Posterior vena cava (tissue), 2 donors: ENCODE measurements at regions of chr9 and their contacts with region 1.

Region 1: DNA sequence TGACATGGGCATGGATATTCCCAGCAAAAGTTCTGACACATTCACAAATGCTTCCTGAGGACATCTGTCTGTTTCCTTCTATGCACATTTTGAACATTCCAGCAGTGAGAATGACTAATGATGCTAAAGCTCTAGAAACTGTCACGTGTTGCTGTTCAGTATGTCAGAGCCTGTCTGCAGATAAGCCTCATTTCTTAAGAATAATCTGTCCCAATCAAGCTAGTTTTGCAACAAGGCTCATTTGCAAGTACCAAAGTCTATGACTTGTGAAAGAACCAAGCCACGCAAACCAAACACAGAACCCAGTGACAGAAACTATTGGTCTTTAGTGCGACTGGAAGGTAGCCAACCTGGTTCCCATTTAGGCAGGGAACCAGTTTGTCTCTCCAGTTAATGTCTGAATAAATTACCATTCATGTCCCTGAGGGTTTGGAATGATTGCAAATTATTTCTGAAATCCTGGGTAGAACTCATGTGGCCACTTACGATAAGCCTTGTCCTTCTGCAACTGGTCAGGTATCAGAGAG is 178.5 kb downstream of the C9orf152 start:
- DNase-seq: no peak

Region 2: GRCh38 chr9:109560457-109561132 is 468.9 kb before region 1 on chr9:
- intact Hi-C with region 1: loop called in 1 of 2 experiments (anchors 10 kb)
- DNase-seq: no peak

Region 3: DNA sequence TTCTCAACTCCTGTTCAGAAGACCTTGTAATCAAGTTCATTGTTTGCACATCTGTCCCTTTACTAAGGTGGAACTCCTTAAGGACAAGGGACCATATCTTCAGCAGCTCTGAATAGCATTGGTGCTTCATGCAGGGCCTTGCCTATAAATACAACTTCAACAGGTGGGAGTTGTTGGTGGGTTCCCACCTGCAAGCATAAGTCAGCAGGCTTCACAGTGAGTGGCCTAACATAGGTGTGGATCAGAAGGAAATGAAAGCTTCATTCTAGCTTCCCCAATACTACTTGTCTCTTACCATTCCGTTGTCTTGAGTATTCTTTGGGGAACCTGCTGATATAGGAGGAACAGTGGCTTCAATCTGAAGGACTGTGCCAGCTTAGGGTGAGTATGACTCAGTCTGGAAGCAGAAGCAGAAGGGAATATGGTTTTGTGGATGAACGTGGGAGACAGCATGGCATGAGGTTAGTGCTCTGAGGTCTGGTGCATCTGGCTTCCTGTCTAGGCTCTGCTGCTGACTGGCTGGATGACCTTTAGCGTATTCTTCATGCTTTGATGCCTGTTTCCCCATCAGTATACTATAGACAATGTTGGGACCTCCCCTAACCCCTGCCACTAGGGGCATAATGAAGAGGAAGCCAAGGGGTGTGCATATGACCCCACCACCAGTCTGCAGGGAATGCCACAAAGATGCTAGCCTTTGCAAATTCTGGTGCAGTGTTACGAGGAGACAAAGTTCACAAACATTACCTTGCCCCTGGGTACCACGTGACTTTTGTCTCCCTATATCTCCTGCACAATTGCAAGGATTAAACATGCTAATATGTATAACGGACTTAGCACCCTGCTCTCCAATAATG is 57.2 kb before region 1 on chr9:
- intact Hi-C with region 1: loop called in 1 of 2 experiments (anchors 10 kb)
- DNase-seq: no peak

Region 4: GRCh38 chr9:110635589-110635988 is 606.1 kb after region 1 on chr9:
- intact Hi-C with region 1: no loop called
- DNase-seq: no peak

Region 5: DNA sequence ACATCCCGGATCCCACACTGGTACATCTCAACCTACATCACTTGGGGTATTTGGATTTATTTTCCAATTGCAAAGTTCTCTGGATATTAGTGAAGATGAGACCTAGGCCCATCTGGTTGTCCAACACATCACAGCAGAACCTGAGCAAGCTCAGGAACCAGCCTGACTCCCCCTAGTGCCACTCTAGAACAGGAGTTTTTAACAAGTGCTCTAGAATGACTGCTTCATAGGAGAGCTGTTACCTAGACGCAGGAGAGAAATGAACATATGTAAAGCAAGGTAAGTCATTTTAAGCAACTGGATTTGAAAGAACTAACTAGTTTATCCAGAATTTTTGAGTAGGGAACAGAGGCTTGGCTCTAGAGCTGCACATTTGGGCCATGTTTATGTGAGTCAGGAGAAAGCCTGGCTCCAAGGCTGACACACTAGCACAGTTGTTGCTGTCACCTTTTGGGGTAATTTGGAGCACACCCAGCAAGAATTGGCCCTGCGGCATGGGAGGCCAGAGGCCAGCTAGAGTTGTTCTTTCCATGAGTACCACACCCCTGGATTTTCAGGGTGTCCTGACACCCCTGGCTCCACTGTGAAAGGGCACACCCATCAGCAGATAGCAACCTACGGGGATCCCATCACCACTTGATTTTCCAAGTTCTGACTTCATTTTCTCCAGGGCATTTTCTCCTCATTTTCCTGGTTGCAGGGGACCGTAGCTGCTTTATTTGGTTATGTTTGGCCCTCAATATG is 1119.7 kb after region 1 on chr9:
- intact Hi-C with region 1: loop called in 1 of 2 experiments (anchors 5 kb)
- DNase-seq: no peak